ENCODE measurements at regions of chr19 and their contacts with region 1.

Region 1: DNA sequence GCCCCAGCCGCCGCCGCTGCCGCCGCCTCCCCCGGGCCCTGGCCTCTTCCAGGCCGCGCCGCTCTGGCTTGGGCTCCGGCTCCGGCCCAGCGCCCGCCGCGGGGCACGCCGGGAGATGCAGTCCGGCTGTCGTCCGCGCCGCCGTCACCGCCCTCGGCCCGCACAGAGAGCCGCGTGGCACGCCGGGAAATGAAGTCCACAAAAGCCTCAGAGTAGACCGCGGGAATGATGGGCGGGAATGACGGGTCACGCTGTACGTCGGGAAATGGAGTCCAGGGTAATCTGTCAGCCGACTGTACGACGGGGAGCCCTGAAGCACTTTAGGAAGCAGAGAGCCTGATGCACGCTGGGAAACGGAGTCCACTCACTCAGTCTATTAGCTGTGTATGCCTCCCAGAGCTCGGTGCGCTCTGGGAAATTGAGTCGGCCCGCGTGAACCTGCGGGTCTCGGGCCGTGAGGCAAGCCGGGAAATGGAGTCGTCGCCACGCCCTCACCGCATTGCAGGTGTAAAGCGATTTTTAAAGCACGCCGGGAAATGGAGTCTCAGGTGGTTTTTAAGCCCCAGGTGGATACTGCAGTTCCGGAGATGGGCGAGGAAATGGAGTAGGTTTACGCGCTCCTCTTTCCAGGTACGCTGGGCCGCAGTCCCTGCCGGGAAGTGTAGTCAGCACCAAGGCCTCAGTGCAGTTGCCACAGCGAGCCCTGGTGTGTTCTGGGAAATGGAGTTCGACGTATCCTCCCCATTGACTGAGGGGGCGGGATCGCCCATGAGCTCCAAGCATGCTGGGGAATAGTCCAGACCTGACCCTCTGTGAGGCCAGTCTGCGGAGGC is at the start of gene GSK3A:
- DNase-seq: peak; percentile 99
- H3K4me3 ChIP-seq: peak within 1 kb of the TSS; percentile 63 to 93 (median 72)
- H3K27ac ChIP-seq: peak within 1 kb of the TSS; percentile 84 to 100 (median 98)
- H3K4me1 ChIP-seq: peaks cover 0 to 62% (median 51%) of the 10 kb centered on the region in 4 donors
- H3K27me3 ChIP-seq: no peaks in the 10 kb centered on the region
- CTCF ChIP-seq: no peak
- EP300 ChIP-seq: peak in 1 of 4 donors; percentile 40
- POLR2A ChIP-seq: no peak
- total RNA-seq, gene GSK3A: 17.4 to 28.5 (median 20.5) TPM

Region 2: GRCh38 chr19:42140125-42140754 is 102.5 kb before region 1 on chr19:
- intact Hi-C with region 1: no loop called
- DNase-seq: no peak
- H3K4me3 ChIP-seq: no peak overlapping the region
- H3K27ac ChIP-seq: no peak overlapping the region
- H3K4me1 ChIP-seq: no peaks in the 10 kb centered on the region
- H3K27me3 ChIP-seq: peaks cover 0 to 26% (median 0%) of the 10 kb centered on the region in 3 donors
- CTCF ChIP-seq: no peak
- EP300 ChIP-seq: no peak
- POLR2A ChIP-seq: no peak

Region 3: GRCh38 chr19:42219812-42220750 is 22.6 kb before region 1 on chr19 and contains the start of gene ZNF526:
- intact Hi-C with region 1: loop called (anchors 2 kb)
- DNase-seq: peak; percentile 99
- H3K4me3 ChIP-seq: peak within 1 kb of the TSS; percentile 75 to 85 (median 81)
- H3K27ac ChIP-seq: peak within 1 kb of the TSS; percentile 86 to 90 (median 89)
- H3K4me1 ChIP-seq: peaks cover 0 to 48% (median 46%) of the 10 kb centered on the region in 4 donors
- H3K27me3 ChIP-seq: no peaks in the 10 kb centered on the region
- CTCF ChIP-seq: no peak
- EP300 ChIP-seq: no peak
- POLR2A ChIP-seq: peak; percentile 38 to 60
- total RNA-seq, gene ZNF526: 2.2 to 6.1 (median 4.3) TPM

Region 4: DNA sequence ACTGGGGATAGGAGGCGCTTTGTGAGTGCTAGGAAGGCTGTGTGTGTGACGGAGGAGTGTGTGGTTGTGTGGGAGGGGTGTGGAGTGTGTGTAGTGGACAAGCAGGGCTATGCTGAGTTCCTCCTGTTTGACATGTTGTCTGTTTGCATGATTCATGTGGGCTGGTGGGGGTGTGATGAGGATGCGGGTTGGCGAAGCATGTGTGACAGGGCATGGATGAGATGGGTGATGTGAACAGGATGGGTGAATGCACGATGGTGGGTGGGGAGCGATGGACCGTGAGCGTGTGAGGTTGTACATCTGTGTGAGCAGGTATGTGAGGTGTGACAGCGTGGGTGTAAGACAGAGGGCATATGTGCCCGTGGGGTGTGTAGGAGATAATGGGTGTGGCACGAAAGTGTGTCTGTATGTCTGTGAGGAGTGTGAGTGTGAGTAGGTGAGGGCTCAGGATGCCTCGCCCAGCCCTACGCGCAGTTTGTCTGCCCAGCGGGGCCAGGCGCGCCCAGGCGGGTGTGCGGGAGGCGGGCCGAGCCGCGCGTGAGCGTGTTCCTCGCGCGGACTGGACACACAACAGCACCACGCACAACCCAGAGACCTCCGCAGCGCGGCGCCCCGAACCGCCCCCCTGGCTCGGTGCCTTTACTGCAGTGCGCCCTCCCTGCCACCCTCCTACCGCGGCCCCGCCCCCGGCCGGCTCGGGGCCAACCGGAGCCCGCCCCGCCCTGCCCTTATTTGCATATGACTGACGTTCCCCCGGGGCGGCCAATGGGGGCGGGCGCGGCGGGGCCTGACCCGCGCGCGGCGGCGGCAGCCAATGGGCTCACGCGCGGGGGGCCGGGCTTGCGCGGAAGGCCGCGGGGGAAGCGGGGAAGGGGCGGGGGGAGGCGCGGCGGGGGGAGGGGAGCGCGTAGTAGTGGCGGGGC is 40.7 kb after region 1 on chr19:
- intact Hi-C with region 1: loop called (anchors 1 kb)
- DNase-seq: peak; percentile 99
- H3K4me3 ChIP-seq: peak overlapping the region; percentile 18 to 76 (median 70)
- H3K27ac ChIP-seq: peak overlapping the region; percentile 94 to 99 (median 96)
- H3K4me1 ChIP-seq: peaks cover 0 to 74% (median 65%) of the 10 kb centered on the region in 4 donors
- H3K27me3 ChIP-seq: no peaks in the 10 kb centered on the region
- CTCF ChIP-seq: no peak
- EP300 ChIP-seq: no peak
- POLR2A ChIP-seq: peak; percentile 57 to 69

Region 5: DNA sequence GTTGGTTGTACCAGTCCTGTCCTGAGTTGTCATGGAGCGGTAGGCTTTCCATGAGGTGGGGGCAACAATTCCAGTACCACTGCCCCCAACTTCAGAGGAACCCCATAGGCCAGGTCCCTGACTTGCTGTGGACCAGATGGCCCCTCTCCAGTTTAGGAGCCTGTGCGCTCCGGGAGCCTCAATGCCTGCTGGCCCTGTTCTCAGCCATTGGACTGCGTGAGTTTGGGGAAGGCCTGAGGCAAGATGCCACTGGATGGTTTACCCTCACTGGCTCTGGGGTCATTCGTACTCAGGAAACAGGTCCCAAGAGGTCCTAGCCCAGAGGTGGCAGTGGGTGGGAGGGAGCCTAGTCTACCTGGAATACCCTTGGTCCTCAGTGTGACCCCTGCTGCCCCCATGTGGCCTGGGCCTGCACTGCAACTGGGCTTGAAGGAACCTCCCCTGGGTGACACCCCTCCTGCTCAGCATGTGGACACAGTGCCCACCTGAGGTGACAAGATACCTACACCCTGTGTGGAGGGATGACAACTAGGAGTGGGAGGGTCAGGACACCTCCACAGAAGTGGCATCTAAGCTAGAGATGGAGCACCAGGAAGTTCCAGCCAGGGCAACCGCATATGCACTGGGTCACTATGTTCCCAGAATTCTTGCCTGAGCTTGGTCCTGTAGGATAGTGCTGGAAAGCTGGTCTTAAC is 53.2 kb after region 1 on chr19:
- intact Hi-C with region 1: loop called (anchors 2 kb)
- DNase-seq: peak; percentile 89
- H3K4me3 ChIP-seq: no peak overlapping the region
- H3K27ac ChIP-seq: no peak overlapping the region
- H3K4me1 ChIP-seq: peaks cover 0 to 3% (median 0%) of the 10 kb centered on the region in 4 donors
- H3K27me3 ChIP-seq: no peaks in the 10 kb centered on the region
- CTCF ChIP-seq: peak; percentile 91 to 97 (median 94)
- EP300 ChIP-seq: no peak
- POLR2A ChIP-seq: no peak